ENCODE measurements at regions of chr6 and their contacts with region 1.

Region 1: DNA sequence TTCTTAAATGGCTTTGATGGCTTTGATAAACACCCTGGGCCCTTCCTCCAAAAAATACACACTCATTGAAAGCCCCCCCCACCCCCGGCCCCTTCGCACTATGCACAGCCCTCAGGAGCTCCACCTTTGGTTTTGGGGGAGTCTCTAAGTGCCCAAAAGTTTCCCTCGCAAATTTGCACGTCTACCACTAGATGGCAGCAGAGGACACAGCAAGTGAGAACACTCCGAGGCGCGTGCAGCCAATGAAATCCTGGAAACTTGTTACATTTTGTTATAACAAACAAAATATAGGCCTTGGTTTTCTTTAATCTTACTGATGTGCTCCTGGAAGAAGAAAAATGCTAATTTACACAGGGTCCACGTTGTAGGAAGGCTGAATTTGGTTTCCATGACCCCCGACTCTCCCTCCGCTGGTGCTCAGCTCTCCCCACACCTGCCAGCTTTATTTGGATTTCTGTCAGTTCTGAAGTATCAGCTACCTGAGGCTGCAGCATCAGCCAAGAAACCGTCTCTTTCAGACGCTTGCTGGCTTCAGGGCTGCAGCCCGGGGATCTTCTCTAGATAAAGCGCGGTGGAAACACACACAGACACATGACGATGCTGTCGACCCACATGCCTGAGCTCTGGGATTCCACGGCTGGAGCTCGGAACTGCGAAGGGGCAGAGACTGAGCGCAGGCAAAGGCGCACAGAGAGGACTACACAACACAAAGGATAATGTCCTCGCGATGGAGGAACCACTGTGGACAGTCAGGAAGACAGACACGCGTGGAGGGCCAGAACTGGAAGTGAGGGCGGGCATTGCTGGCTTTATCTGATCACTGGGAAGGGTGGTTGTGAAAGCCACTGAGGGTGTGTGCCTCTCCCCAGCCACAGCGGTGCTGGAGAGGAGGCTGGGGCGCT is 148.4 kb upstream of the RPS6KA2 start:
- DNase-seq: peak; percentile 62 to 70
- ATAC-seq: peak; percentile 71
- H3K4me3 ChIP-seq: no peak overlapping the region
- H3K27ac ChIP-seq: no peak overlapping the region
- H3K4me1 ChIP-seq: no peaks in the 10 kb centered on the region
- H3K27me3 ChIP-seq: no peaks in the 10 kb centered on the region

Region 2: GRCh38 chr6:166849749-166850183 is 74.3 kb after region 1 on chr6:
- intact Hi-C with region 1: no loop called
- DNase-seq: peak in 1 of 2 donors; percentile 60
- ATAC-seq: no peak
- H3K4me3 ChIP-seq: no peak overlapping the region
- H3K27ac ChIP-seq: no peak overlapping the region
- H3K4me1 ChIP-seq: no peaks in the 10 kb centered on the region
- H3K27me3 ChIP-seq: no peaks in the 10 kb centered on the region

Region 3: DNA sequence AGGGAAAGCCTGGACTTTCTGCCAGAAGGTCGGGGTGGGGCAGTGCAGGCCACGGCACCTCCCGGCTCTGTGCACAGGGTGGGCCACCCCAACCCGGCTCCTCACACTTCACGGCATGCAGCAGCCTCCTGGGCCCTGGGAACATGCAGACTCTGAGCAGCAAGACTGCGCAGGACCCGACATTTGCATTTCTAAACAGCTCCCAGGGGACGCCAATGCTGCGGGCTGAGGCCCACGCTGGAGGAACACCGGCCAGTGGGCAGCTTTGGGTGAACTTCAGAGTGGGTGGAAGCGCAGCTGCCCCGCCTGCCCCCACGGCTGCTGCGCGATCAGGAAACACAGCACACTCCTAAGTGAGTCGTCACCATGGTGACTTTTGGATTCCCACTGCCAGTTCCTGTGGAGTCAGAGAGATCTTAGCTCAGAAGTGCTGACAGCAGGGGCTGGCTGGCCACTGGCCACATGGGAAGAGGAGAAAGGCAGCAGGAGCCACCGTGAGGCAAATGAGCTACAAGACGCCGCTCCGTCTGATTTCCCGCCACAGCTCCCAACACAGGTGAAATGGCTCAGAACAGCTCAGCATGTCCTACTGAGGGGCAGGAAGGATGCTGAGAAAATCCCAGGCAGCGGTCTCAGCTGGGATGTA is 128.8 kb after region 1 on chr6:
- intact Hi-C with region 1: no loop called
- DNase-seq: no peak
- ATAC-seq: no peak
- H3K4me3 ChIP-seq: no peak overlapping the region
- H3K27ac ChIP-seq: no peak overlapping the region
- H3K4me1 ChIP-seq: no peaks in the 10 kb centered on the region
- H3K27me3 ChIP-seq: no peaks in the 10 kb centered on the region

Region 4: GRCh38 chr6:166942393-166943168 is 167.2 kb after region 1 on chr6:
- intact Hi-C with region 1: no loop called
- DNase-seq: no peak
- ATAC-seq: no peak
- H3K4me3 ChIP-seq: no peak overlapping the region
- H3K27ac ChIP-seq: no peak overlapping the region
- H3K4me1 ChIP-seq: no peaks in the 10 kb centered on the region
- H3K27me3 ChIP-seq: no peaks in the 10 kb centered on the region

Region 5: GRCh38 chr6:166956444-166957086 is 181.1 kb after region 1 on chr6 and contains the start of gene RNASET2:
- intact Hi-C with region 1: loop called (anchors 10 kb)
- DNase-seq: peak; percentile 99 to 100
- ATAC-seq: peak; percentile 98
- H3K4me3 ChIP-seq: peak within 1 kb of the TSS; percentile 70 to 83
- H3K27ac ChIP-seq: peak within 1 kb of the TSS in 1 of 2 donors; percentile 45
- H3K4me1 ChIP-seq: peaks cover 0 to 1% of the 10 kb centered on the region in 2 donors
- H3K27me3 ChIP-seq: no peaks in the 10 kb centered on the region
- total RNA-seq, gene RNASET2: 23.3 to 64.8 TPM

Region 6: DNA sequence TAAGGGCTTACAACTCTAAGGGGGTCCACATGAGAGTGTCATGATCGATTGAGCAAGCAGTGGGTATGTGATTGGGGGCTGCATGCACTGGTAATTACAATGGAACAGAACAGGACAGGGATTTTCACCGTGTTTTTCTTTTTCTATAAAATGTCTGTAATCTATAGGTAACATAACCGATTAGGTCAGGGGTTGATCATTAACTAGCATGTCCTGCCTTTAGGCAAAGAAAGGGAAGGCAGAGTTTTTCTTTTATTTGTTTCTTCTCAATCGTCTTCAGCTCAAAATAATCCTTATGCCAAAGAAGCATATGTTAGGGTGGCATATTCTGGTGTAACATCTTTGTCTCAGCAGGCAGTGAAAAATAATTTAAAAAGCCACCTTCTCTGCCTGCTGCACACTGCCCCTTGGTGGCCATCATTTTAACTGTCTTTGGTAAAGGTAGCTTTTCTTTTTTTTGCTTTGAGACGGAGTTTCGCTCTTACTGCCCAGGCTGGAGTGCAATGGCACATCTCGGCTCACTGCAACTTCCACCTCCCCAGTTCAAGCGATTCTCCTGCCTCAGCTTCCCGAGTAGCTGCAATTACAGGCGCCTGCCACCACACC is 214.1 kb after region 1 on chr6:
- intact Hi-C with region 1: loop called in 1 of 2 experiments (anchors 10 kb)
- DNase-seq: no peak
- ATAC-seq: no peak
- H3K4me3 ChIP-seq: no peak overlapping the region
- H3K27ac ChIP-seq: no peak overlapping the region
- H3K4me1 ChIP-seq: no peaks in the 10 kb centered on the region
- H3K27me3 ChIP-seq: no peaks in the 10 kb centered on the region

Region 7: GRCh38 chr6:167141667-167142432 is 366.4 kb after region 1 on chr6:
- intact Hi-C with region 1: loop called (anchors 10 kb)
- DNase-seq: peak in 1 of 2 donors; percentile 76
- ATAC-seq: peak; percentile 49
- H3K4me3 ChIP-seq: no peak overlapping the region
- H3K27ac ChIP-seq: no peak overlapping the region
- H3K4me1 ChIP-seq: no peaks in the 10 kb centered on the region
- H3K27me3 ChIP-seq: no peaks in the 10 kb centered on the region

Measured in aorta (tissue), 5 donors.